Right ventricle myocardium superior (tissue), 1 donor: ENCODE measurements at regions of chr2 and their contacts with region 1.

Region 1: DNA sequence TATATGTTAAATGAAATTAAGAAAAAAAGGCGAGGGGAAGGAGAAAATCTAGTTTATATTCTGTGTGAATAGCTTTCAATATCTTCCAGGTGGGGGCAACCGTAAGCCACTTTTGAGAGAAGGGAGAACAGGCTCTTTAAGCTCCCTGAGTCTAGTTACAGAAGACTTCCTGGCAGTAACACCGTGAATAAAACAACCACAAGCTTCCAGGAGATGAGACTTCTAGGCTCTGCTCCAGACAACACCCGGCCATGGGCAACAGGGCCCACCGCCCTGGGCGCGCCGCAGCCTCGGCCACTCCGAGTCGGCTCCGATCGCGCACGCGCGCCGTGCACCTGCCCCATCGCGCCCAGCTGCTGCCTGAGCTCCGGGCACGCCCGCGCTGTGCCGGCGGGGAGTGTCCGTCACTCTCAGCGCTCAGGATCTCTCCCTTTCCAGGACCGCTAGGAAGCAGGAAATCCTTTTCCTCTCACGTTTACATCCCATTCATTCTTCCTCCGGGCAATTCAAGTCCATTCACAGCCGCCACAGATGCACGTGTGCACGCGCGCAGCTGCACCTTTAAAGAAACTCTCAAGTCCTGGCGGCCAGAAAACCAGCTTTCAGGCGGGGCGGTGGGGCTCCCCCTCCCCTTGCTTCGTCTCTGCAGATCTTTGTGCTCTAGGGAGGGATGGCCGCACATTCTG is 19.4 kb upstream of the PAX3 start:
- DNase-seq: peak; percentile 70
- ATAC-seq: peak; percentile 84

Region 2: GRCh38 chr2:222024932-222025880 is 293.0 kb before region 1 on chr2:
- intact Hi-C with region 1: no loop called
- DNase-seq: no peak
- ATAC-seq: peak; percentile 58

Region 3: GRCh38 chr2:222561817-222562645 is 243.9 kb after region 1 on chr2:
- intact Hi-C with region 1: loop called (anchors 5 kb)
- DNase-seq: no peak
- ATAC-seq: peak; percentile 77

Region 4: DNA sequence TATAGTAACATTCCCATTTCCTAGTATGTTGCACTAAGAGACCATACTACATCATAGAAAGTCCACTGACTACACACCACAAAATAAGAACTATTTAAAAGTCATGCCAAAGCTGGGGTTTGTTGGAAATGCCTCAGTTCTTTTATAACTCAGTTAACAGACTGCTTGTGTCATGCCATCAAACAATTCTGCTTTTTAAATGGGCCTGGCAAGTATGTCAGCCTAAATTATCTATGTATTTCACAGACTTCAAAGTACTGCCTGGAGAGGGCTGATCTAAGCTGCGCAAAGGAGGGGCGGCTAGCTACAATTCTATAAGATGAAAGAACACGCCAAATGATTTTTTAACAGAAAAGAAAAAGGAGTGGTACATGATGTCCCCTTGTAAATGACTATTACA is 288.1 kb after region 1 on chr2:
- intact Hi-C with region 1: loop called (anchors 2 kb)
- DNase-seq: no peak
- ATAC-seq: no peak